PC-3 (cell line): ENCODE measurements at regions of chr2 and their contacts with region 1.

Region 1: GRCh38 chr2:27370026-27370815 is at the starts of genes EIF2B4 and SNX17:
- DNase-seq: peak; percentile 99
- ATAC-seq: peak; percentile 92
- H3K4me3 ChIP-seq: peak within 1 kb of the TSS; percentile 76
- H3K27ac ChIP-seq: peak within 1 kb of the TSS; percentile 51
- H3K4me1 ChIP-seq: peaks cover 35% of the 10 kb centered on the region
- H3K27me3 ChIP-seq: no peaks in the 10 kb centered on the region
- CTCF ChIP-seq: peak; percentile 81
- total RNA-seq, gene EIF2B4: 35.8 and 43.9 TPM in 2 replicates
- total RNA-seq, gene SNX17: 99.6 and 110 TPM in 2 replicates

Region 2: DNA sequence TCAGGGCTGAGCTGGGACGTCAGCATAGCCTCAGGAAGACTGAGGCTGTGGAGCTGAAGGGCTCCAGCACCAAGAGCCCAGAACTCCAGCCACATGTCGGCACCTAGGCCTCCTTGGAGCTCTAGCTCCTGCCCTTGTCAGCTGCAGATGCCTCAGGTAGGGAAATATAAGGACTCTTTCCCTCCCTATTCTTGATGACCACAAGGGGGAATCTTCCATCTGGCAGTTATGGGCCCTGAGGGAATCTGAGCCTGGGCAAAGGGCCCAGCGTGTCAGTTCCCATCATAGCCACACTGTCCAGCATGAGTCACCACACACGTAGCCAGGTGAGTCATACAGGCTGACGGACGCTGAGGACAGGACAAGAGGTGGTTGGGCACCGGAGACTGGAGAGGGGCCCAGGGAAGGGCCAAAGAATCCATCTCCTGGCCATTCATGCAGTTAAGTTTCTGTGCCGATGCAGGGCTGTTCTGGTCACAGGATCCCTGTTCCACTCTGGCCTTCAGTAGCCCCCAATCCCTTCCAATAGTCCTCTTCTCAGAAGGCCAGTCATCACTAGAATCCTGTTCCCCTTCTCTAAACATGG is 49.2 kb before region 1 on chr2:
- CTCF ChIA-PET with region 1: no interaction called
- POLR2A ChIA-PET with region 1: interaction called, 3 read pairs
- intact Hi-C with region 1: loop called (anchors 1 kb)
- DNase-seq: peak; percentile 99
- ATAC-seq: peak; percentile 86
- H3K4me3 ChIP-seq: peak overlapping the region; percentile 81
- H3K27ac ChIP-seq: peak overlapping the region; percentile 94
- H3K4me1 ChIP-seq: peaks cover 32% of the 10 kb centered on the region
- H3K27me3 ChIP-seq: no peaks in the 10 kb centered on the region
- CTCF ChIP-seq: peak; percentile 70

Region 3: DNA sequence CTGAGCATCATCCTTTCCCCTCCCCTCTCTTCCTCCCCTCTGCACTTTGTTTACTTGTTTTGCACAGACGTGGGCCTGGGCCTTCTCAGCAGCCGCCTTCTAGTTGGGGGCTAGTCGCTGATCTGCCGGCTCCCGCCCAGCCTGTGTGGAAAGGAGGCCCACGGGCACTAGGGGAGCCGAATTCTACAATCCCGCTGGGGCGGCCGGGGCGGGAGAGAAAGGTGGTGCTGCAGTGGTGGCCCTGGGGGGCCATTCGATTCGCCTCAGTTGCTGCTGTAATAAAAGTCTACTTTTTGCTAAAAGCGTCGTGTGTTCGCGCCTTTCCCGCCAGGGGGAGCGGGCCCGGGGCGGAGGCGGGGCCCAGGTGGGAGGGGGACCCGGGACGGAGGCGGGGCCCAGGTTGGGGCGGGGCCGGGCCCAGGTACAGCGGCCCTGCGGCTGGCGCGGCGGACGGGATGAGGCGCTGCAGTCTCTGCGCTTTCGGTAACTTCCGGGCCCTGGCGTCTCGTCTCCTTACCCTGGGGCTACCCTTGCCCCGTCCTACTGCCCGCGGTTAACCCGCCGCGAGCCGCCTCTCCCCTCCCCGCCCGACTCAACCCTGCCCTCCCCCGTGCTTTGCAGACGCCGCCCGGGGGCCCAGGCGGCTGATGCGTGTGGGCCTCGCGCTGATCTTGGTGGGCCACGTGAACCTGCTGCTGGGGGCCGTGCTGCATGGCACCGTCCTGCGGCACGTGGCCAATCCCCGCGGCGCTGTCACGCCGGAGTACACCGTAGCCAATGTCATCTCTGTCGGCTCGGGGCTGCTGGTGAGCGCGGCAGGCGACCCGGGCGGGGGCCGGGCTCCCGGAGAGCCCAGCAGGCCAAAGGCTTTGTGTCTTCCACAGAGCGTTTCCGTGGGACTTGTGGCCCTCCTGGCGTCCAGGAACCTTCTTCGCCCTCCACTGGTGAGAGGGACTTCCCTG is 72.0 kb after region 1 on chr2 and contains the start of gene KRTCAP3:
- CTCF ChIA-PET with region 1: no interaction called
- POLR2A ChIA-PET with region 1: no interaction called
- intact Hi-C with region 1: no loop called
- DNase-seq: peak; percentile 14
- ATAC-seq: no peak
- H3K4me3 ChIP-seq: no peak within 1 kb of the TSS
- H3K27ac ChIP-seq: no peak within 1 kb of the TSS
- H3K4me1 ChIP-seq: peaks cover 11% of the 10 kb centered on the region
- H3K27me3 ChIP-seq: no peaks in the 10 kb centered on the region
- CTCF ChIP-seq: no peak
- total RNA-seq, gene KRTCAP3: 0.22 TPM in 1 of 2 replicates, not detected in the other